ENCODE measurements at regions of chr14 and their contacts with region 1.

Region 1: DNA sequence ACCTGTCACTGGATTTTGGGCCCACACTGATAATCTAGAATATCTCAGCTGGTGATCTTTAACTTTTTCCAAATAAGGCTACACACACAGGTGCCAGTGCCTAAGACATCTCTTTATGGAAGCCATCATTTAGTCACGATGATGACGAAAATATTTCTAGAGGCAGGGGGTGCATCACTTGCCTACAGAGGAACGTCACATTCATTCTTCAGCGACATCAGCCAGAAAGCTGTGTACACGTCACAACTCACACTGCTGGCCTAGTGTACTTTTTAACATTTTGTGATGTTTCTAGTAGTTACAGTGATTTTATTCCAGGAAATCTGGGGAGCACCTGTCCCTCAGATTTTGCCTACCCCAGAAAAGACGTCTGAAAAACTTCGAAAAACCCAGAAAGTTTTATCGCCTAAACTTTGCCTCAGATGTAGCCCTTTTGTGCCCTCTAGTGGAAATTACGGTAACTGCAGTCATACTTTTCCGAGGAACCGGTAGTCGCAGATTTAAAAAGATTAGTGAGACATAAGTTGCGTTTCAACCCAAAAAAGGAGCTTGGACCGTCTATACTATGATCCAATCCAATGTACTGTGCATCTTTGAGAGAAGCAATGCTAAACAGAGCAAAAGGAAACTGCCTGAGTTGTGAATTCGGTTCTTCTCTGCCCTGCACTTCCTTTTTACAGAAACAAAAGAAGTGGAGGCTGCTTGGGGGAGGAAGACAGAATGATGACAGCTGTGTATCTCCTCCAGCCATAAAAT is 64.3 kb upstream of the STON2 start:
- DNase-seq: peak; percentile 89

Region 2: GRCh38 chr14:80954687-80955299 is 509.6 kb before region 1 on chr14:
- in situ Hi-C with region 1: loop called (anchors 25 kb)
- DNase-seq: peak; percentile 67

Region 3: DNA sequence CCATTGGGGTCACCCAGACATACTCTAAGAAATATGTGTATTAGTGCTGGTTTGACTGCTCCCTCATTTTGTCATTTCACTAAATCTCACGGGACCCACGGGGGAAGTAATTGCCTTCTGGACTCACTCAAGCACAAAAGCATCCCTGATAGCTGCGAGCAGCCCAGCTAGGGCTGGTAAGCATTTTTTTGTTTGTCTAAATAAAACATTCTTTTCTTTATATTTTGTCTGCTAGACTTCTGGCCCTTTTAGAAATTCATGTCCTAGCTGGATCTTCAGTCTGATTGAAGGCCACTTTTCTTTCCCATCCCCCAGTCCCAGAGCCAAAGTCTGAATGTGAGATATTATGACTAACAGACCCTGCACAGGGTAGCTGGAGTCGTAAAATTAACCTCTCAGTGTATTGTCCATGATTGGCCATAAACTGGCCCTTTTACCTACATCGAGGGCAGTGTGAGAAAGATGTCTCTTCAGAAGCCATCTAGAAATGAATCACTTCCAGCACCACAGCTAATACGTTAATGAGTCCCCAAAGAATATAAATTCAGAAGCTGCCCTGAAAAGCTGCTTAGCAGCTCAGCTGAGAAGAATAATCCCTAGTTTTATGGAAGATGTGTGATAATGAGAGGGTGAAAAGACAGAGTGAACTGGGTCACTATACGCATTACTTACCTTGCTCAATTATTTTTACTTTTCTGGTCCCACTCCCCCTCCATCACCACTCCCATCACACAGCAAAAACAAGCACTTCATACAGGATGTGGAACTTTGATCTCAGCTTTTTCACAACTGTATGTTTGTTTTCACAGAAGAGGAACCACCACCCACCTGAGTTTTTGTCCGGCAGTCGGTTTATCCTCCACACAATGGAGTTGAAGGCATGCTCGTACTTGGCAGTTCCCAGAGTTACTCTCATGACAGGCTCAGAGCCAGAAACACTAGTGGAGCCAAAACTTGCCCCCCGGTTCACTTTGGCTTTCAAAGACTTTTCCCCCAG is 188.1 kb before region 1 on chr14:
- in situ Hi-C with region 1: loop called (anchors 10 kb)
- DNase-seq: no peak

Region 4: DNA sequence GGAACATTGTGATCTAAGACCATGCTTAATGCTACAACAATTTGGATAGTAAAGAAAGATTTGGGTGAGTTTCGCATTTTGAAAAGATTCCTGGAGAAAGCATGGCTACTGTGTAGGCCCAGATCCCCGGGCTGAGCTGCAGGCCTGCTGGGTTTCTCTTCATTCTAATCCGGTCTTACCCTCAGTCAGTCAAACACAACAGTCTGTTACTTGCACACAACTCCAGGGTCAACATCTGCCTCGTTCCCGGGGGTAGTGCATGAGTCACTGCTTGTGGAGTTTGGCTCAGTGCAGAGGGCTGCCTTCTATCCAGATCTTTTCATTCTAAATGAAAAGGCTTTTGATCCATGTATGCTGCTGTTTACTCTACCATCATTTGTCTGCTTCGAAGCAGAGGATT is 129.6 kb after region 1 on chr14:
- in situ Hi-C with region 1: no loop called
- DNase-seq: no peak